Heart right ventricle (tissue), 16 donors: ENCODE measurements at regions of chr2 and their contacts with region 1.

Region 1: GRCh38 chr2:69643602-69644505 is at the start of gene AAK1:
- DNase-seq: peak; percentile 92
- ATAC-seq: peak; percentile 91 to 96 (median 94)
- H3K4me3 ChIP-seq: peak within 1 kb of the TSS; percentile 77 to 99 (median 92)
- H3K27ac ChIP-seq: peak within 1 kb of the TSS; percentile 90 to 99 (median 98)
- H3K4me1 ChIP-seq: peaks cover 0 to 60% (median 45%) of the 10 kb centered on the region in 9 donors
- H3K27me3 ChIP-seq: no peaks in the 10 kb centered on the region
- CTCF ChIP-seq: peak in 3 of 9 donors; percentile 6 to 40 (median 25)
- total RNA-seq, gene AAK1: 70.2 to 148 (median 125) TPM

Region 2: DNA sequence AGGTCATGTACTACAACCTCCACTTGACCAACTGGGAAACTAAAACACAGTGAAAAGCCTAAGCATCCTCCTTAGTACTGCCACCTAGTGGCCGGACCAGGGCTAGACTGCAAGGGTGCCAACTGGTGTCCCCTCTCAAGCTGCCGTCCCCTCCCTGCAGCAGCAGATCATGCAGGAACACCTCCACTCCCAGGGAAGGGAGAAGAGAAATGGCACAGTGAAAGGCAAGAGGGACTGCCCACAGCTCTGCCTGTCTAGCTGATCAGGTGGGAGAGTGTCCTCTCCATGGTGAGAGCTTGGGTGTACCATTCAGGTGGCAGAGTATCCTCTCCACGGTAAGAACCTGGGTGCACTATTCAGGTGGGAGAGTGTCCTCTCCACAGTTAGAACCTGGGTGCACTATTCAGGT is 78.4 kb before region 1 on chr2:
- intact Hi-C with region 1: loop called in 9 of 10 experiments (anchors 2 to 10 kb)
- DNase-seq: peak; percentile 48 to 58
- ATAC-seq: peak; percentile 33 to 66 (median 50)
- H3K4me3 ChIP-seq: no peak overlapping the region
- H3K27ac ChIP-seq: peak overlapping the region in 2 of 10 donors; percentile 30 to 50
- H3K4me1 ChIP-seq: peaks cover 9 to 88% (median 50%) of the 10 kb centered on the region in 9 donors
- H3K27me3 ChIP-seq: no peaks in the 10 kb centered on the region
- CTCF ChIP-seq: peak; percentile 24 to 88 (median 72)

Region 3: GRCh38 chr2:69660637-69661036 is 16.8 kb after region 1 on chr2:
- intact Hi-C with region 1: loop called in 1 of 10 experiments (anchors 2 kb)
- DNase-seq: no peak
- ATAC-seq: no peak
- H3K4me3 ChIP-seq: no peak overlapping the region
- H3K27ac ChIP-seq: peak overlapping the region in 6 of 10 donors; percentile 30 to 70 (median 55)
- H3K4me1 ChIP-seq: peaks cover 0 to 22% (median 5%) of the 10 kb centered on the region in 9 donors
- H3K27me3 ChIP-seq: no peaks in the 10 kb centered on the region
- CTCF ChIP-seq: no peak

Region 4: GRCh38 chr2:69683101-69683971 is 39.5 kb after region 1 on chr2:
- intact Hi-C with region 1: loop called in 4 of 10 experiments (anchors 5 kb)
- DNase-seq: peak in 1 of 2 donors; percentile 82
- ATAC-seq: peak; percentile 81 to 96 (median 92)
- H3K4me3 ChIP-seq: peak overlapping the region in 4 of 10 donors; percentile 1 to 19 (median 12)
- H3K27ac ChIP-seq: peak overlapping the region; percentile 50 to 82 (median 70)
- H3K4me1 ChIP-seq: peaks cover 2 to 55% (median 19%) of the 10 kb centered on the region in 9 donors
- H3K27me3 ChIP-seq: no peaks in the 10 kb centered on the region
- CTCF ChIP-seq: no peak

Region 5: GRCh38 chr2:69914170-69914960 is 270.5 kb after region 1 on chr2:
- intact Hi-C with region 1: no loop called
- DNase-seq: peak; percentile 97 to 100
- ATAC-seq: peak; percentile 94 to 98 (median 96)
- H3K4me3 ChIP-seq: peak overlapping the region; percentile 45 to 95 (median 76)
- H3K27ac ChIP-seq: peak overlapping the region; percentile 80 to 97 (median 96)
- H3K4me1 ChIP-seq: peaks cover 0 to 59% (median 34%) of the 10 kb centered on the region in 9 donors
- H3K27me3 ChIP-seq: no peaks in the 10 kb centered on the region
- CTCF ChIP-seq: peak in 5 of 9 donors; percentile 29 to 53 (median 36)